Dorsolateral prefrontal cortex (tissue), 120 donors: ENCODE measurements at regions of chr5 and their contacts with region 1.

Region 1: DNA sequence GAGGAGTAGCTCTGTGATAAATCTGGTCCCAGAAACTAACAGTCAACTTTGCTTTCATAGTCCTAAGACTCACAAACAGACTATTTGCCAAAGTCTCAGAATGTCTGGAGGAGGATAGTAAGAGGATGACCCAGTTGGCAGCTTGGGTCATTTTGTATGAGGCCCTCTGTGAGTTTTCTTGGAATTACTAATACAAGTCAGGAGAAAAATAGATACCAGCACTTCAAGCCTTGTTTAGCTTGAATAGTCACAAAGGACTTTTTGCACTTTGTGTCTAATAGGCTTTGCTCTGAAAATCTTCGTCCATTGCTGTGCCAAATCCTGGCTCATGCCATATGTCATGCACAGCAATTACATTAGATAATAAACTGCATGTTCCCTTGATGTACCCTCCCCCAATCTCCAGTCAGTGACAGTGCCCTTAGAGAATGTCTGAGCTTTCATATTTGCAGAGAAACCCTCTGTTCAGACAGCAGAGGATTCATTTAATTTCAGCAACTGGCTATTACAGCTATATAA is 612.8 kb downstream of the CSNK1G3 start:
- DNase-seq: no peak
- H3K4me3 ChIP-seq: no peak overlapping the region
- H3K27ac ChIP-seq: peak overlapping the region in 4 of 59 donors; percentile 4 to 47 (median 28)
- H3K27me3 ChIP-seq: no peaks in the 10 kb centered on the region
- CTCF ChIP-seq: no peak

Region 2: DNA sequence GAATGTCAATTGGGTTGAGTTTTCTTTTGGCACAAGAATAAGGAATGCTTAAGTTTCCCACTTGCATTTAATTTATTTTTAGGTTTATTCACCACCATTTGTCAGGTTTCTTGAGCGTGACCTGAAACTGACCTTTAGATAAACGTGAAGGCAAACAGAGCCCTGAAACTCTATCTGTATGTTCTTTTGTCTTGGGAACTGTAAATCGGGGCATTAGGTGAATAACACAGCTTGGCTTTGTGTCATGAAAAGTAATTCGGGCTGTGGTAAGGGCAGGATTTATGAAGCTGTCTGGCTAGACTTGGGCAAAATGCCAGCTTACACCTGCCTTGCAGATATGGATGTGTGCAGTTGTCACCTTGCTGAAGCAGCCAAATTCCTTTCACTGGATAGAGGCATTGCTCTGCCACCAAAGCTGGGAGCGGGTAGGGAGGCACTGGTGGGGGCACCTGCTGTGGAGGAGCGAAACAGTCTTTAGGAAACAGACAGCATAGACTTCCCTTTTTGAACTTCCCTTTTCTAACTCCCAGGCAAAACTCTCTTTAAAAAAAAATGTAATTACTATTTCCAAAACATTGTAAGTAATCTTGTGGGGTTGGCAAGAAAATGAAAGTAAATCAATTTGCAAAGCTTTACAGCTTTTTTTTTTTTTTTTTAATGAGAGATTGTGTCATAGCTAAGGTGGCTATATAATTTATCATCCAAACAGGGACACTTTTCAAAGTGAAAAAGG is 67.6 kb before region 1 on chr5:
- intact Hi-C with region 1: loop called in 1 of 2 experiments (anchors 10 kb)
- DNase-seq: peak in 1 of 10 donors; percentile 29
- H3K4me3 ChIP-seq: peak overlapping the region in 43 of 59 donors; percentile 1 to 54 (median 26)
- H3K27ac ChIP-seq: peak overlapping the region in 20 of 59 donors; percentile 3 to 68 (median 36)
- H3K27me3 ChIP-seq: no peaks in the 10 kb centered on the region
- CTCF ChIP-seq: no peak

Region 3: DNA sequence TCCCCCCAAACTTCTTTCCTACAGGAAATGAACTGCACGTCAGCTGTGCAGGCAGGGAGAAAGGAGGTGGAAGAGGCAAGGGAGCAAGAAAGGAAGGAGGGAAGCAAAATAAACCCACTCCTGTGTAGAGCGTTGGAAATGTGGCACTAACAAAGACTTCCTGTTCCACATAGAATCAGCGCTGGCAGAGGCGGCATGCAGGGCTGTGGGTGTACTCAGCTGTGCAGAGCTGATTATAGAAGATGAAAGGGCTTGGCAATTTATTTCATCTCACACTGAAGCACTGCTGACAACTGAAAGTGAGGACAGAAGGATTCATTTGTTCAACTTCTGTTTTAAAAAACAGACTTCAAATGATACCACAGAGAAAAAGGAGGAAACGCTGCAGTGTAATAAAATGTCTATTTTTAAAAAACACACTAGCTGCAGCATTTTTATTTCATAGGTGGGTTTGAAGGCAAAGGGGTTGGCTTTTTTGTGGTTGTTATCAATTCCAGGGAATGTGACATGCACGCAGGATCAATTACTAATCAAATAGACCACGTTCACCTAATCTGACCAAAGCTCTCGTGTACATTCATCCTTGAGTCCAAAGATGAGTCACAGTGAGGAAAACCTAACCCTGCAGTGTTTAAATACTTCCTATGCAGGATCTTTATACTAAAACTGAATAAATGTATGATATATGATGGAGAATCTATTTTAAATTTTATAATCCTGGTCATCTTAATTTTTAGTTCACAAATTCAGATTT is 38.2 kb after region 1 on chr5:
- intact Hi-C with region 1: loop called in 1 of 2 experiments (anchors 5 kb)
- DNase-seq: peak; percentile 33 to 92 (median 86)
- H3K4me3 ChIP-seq: peak overlapping the region in 49 of 59 donors; percentile 0 to 55 (median 30)
- H3K27ac ChIP-seq: peak overlapping the region; percentile 53 to 95 (median 89)
- H3K27me3 ChIP-seq: no peaks in the 10 kb centered on the region
- CTCF ChIP-seq: peak in 5 of 56 donors; percentile 5 to 20 (median 12)

Region 4: DNA sequence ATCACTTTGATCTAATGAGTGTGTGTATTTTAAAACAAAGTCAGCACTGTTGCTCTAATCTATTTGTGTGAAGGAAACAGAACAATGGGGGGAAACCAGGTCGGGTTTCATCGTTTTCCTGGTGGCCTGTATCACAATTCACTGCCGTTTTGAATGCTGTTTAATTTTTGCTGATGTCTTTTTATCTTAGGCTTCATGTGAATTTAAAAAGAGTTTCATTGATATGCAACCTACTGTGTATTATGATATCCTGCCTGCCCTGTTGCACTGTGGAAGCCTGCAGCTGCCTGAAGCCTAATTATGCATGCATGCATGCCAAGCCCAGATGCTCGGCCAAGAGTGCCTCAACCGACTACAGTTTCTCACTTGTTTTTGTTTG is 314.1 kb after region 1 on chr5:
- intact Hi-C with region 1: no loop called
- DNase-seq: peak in 9 of 10 donors; percentile 53 to 88 (median 75)
- H3K4me3 ChIP-seq: peak overlapping the region in 28 of 59 donors; percentile 2 to 58 (median 36)
- H3K27ac ChIP-seq: peak overlapping the region; percentile 52 to 97 (median 90)
- H3K27me3 ChIP-seq: no peaks in the 10 kb centered on the region
- CTCF ChIP-seq: peak in 3 of 56 donors; percentile 5 to 11 (median 8)